Motor neuron (in vitro differentiated cells): ENCODE measurements at regions of chr11 and their contacts with region 1.

Region 1: DNA sequence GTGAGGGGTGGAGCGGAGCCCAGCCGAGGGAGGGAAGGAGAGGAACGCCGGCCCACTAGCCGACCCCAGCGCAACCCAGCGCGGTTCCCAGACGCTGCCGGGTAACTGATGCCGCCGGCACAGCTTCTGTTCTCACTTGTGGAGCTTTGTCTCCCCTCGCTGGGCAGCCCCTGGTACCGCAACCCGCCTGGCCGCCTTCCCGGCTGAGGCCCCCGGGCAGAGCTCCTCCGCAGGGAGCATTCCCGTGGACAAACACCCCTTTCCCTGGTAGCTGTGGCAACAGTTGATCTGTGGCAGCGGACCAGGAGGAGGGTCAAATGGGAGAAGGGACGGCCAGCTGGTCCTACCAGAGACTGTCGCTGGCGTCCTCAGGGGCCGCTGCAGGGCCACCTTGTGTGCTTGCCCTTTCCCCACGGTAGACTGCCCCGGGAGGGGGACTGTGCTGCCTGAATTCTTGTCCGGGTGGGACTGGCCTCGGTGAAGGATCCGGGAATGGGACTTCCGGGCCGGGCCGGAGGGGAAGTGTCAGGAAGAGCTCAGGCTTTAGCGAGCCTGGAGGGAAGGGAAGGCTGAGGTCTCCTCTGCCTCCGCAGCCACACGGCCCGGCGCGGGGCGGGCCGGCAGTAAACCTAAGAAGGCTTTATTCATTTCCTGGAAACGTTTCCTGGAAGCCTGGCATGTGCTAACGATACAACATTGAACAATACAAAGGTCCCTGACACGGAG is 468.0 kb downstream of the OPCML start:
- ATAC-seq: peak; percentile 87 to 95 (median 94)
- H3K4me3 ChIP-seq: peak overlapping the region in 4 of 5 donors; percentile 24 to 40 (median 32)
- H3K27ac ChIP-seq: peak overlapping the region; percentile 43 to 45
- H3K4me1 ChIP-seq: peaks cover 8 to 14% of the 10 kb centered on the region in 2 donors

Region 2: DNA sequence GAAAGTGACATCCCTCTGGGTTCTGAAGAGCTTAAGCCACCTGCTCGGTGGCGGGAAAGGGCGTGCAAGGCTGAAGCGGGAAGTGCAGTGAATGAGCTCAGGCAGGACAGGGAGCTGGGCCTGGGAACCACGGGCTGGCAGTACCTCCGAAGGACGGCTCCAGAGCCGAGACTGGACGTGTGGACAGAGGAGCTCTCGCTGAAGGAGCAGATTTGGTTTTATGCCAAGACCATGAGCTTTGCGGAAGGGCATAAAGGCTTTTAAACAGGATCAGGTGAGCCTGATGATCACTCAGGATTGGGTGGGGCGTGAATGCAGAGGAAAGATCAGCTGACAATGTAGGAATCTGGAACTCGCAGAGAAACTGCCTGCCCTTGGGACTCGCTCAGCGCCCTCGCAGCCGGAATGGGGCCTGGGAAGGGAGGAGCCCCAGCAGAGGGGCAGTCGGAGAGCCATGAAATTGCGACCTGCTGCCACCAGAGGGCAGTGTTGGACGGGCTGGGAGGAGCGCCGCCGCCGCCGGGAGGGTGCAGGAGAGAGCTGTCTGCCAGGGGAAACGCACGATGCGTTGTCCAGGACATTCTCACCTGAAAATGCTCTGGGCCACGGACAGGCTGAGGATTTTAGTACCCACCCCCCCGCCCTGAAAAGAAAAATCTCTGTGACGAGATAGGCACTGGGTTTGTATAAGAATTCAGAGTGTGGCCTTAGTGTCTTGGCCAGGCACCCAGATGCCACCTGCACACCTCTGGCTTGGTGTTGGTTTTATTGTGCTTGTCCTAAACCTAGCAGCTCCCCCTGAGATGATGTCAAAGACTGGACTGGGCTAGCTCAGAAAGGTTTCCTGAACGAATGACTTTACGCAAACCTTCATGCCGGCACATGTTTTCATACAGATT is 1369.5 kb before region 1 on chr11:
- in situ Hi-C with region 1: loop called in 1 of 9 experiments (anchors 25 kb)
- ATAC-seq: peak; percentile 73 to 90 (median 82)
- H3K4me3 ChIP-seq: no peak overlapping the region
- H3K27ac ChIP-seq: no peak overlapping the region
- H3K4me1 ChIP-seq: peaks cover 38 to 52% of the 10 kb centered on the region in 2 donors

Region 3: GRCh38 chr11:131867457-131868257 is 1196.7 kb before region 1 on chr11:
- in situ Hi-C with region 1: loop called in 1 of 9 experiments (anchors 25 kb)
- ATAC-seq: peak; percentile 36 to 91 (median 86)
- H3K4me3 ChIP-seq: no peak overlapping the region
- H3K27ac ChIP-seq: no peak overlapping the region
- H3K4me1 ChIP-seq: peaks cover 22 to 30% of the 10 kb centered on the region in 2 donors

Region 4: GRCh38 chr11:132126973-132127899 is 937.1 kb before region 1 on chr11:
- in situ Hi-C with region 1: loop called in 1 of 9 experiments (anchors 25 kb)
- ATAC-seq: peak; percentile 24 to 88 (median 72)
- H3K4me3 ChIP-seq: no peak overlapping the region
- H3K27ac ChIP-seq: no peak overlapping the region
- H3K4me1 ChIP-seq: peaks cover 32 to 33% of the 10 kb centered on the region in 2 donors

Region 5: GRCh38 chr11:133175103-133175502 is 110.8 kb after region 1 on chr11:
- in situ Hi-C with region 1: no loop called
- ATAC-seq: no peak
- H3K4me3 ChIP-seq: no peak overlapping the region
- H3K27ac ChIP-seq: no peak overlapping the region
- H3K4me1 ChIP-seq: peaks cover 36 to 42% of the 10 kb centered on the region in 2 donors